Lower leg skin (tissue), 4 donors: ENCODE measurements at regions of chr7 and their contacts with region 1.

Region 1: GRCh38 chr7:148954766-148955165 is 70.7 kb upstream of the EZH2 start:
- DNase-seq: no peak
- H3K4me3 ChIP-seq: no peak overlapping the region
- CTCF ChIP-seq: no peak
- POLR2A ChIP-seq: no peak

Region 2: DNA sequence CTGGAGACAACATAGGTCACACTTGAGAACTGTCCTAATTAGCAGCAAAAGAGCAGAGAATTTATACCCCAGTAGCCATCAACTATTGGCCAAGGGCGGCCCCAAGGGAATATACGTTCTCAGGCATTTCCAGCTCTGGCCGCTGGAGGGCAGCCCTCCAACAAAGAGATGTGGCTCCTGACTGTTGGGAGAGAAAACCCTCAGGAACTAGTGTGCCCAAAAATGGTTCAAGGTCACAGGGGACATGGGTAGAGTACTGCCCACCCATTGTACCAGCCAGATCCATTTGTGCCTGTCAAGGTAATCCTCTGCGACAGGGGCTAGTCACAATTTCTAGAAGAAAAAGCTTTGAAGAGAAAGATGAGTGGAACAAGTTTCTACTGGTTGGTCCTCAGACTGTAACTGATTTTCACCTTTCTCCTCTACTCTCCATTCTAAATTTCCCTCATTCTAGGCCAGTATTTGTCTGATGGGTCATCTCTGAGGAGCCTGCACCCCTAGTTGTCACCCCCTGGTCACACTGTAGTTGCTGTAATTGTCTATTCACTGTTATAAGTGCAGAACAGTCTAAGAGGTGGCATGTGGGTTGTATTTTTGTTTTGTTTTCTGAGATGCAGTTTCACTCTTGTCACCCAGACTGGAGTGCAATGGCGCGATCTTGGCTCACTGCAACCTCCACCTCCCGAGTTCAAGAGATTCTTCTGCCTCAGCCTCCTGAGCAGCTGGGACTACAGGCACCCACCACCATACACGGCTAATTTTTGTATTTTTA is 378.9 kb before region 1 on chr7:
- intact Hi-C with region 1: loop called (anchors 5 kb)
- DNase-seq: peak; percentile 74 to 94
- H3K4me3 ChIP-seq: no peak overlapping the region
- CTCF ChIP-seq: peak in 1 of 3 donors; percentile 29
- POLR2A ChIP-seq: no peak

Region 3: GRCh38 chr7:148699782-148700629 is 254.8 kb before region 1 on chr7:
- intact Hi-C with region 1: loop called (anchors 10 kb)
- DNase-seq: no peak
- H3K4me3 ChIP-seq: peak overlapping the region; percentile 81
- CTCF ChIP-seq: no peak
- POLR2A ChIP-seq: no peak